ENCODE measurements at regions of chr2 and their contacts with region 1.

Region 1: DNA sequence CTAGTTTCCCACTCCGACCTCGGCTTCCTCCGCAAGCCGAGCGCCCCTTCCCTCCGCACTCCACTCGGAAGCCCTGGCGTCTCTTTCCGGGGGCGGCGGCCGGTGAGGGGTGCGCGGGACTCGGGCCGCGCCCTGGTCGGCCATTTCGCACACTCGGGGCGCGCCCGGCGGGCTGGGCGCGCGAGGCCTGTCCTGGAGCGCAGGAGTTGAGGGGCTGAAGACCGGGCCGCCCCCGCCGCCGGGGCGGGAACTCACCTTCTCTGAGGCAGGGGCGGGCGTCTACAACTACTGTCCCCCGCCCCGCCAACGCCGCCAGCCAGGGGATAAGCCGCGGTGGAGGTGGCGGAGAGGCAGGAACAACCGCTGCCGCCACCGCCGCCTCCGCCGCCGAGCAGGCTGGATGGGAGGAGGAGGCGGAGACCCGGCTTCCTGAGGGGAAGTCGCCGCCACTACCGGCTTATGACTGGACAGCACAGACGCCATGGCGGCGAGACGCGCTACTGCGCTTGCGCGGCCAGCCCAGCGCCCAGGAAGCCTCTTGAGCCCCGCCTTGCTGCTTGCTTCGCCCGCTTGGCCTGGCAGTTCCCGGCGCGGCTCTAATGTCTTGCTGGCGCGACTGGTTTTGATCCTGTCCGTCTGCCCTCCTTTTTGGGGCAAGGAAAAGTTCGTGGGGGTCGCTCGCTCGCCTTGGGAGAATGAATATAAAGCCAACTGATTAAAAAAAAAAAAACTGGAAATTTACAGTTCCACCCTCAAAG is at the start of gene KRCC1:
- DNase-seq: peak; percentile 86 to 98 (median 94)
- ATAC-seq: peak; percentile 91
- H3K4me3 ChIP-seq: peak within 1 kb of the TSS; percentile 57 to 84
- H3K4me3 Mint-ChIP-seq: peak within 1 kb of the TSS; percentile 96
- H3K27ac ChIP-seq: peak within 1 kb of the TSS; percentile 80 to 90
- H3K27ac Mint-ChIP-seq: peak within 1 kb of the TSS; percentile 98
- H3K4me1 ChIP-seq: peaks cover 23% of the 10 kb centered on the region
- H3K4me1 Mint-ChIP-seq: peaks cover 54% of the 10 kb centered on the region
- H3K27me3 ChIP-seq: no peaks in the 10 kb centered on the region
- H3K27me3 Mint-ChIP-seq: no peaks in the 10 kb centered on the region
- CTCF ChIP-seq: no peak
- total RNA-seq, gene KRCC1: 3.1 to 3.6 TPM

Region 2: DNA sequence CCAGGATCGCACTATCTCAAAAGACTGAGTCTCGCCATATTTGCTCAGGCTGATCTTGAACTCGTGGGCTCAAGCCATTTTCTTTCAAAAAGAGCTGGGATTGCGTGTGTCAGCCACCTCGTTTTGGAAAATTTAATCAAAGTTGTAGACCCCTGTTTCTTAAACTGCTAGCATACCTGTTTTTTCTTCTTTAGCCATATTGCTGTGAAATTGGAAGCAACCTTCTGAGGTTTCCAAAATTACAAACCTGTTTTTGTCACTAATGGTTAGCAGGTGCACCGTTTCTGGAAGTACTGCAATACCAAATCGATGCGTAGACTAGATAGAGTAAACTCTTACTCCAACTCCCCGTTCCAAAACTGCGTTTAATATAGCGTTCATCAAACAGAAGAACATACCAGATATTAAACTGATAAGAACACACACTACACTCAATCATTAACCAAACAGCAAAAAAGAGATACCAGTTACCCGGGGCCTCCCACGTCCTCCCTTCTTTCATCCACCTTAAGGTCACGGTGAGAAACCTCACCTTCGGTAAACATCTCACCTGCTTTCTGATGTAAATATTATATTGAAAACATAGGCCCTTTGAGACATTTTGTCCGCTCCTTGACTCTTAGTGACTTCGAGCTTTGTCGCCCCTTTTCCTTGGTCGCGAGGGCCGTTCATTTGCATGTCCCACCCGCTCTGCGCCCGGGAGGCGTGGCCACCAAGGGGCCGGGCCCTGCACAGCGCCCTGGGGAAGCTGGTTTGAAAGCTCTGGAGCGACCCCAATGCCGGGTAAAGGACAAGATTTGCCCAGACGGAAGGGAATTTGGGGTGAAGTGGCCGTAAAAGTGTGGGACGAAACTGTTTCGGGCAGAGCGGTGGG is 39.2 kb before region 1 on chr2 and contains the start of gene RNU2-63P:
- CTCF ChIA-PET with region 1: interaction called, 9 read pairs
- POLR2A ChIA-PET with region 1: interaction called, 5 read pairs
- intact Hi-C with region 1: loop called (anchors 1 kb)
- DNase-seq: peak; percentile 65 to 89 (median 79)
- ATAC-seq: peak; percentile 86
- H3K4me3 ChIP-seq: peak within 1 kb of the TSS; percentile 68 to 92
- H3K4me3 Mint-ChIP-seq: peak within 1 kb of the TSS; percentile 100
- H3K27ac ChIP-seq: peak within 1 kb of the TSS; percentile 89 to 90
- H3K27ac Mint-ChIP-seq: peak within 1 kb of the TSS; percentile 100
- H3K4me1 ChIP-seq: peaks cover 5% of the 10 kb centered on the region
- H3K4me1 Mint-ChIP-seq: peaks cover 22% of the 10 kb centered on the region
- H3K27me3 ChIP-seq: no peaks in the 10 kb centered on the region
- H3K27me3 Mint-ChIP-seq: no peaks in the 10 kb centered on the region
- CTCF ChIP-seq: no peak
- total RNA-seq, gene RNU2-63P: 4.4 to 9.1 TPM

Region 3: DNA sequence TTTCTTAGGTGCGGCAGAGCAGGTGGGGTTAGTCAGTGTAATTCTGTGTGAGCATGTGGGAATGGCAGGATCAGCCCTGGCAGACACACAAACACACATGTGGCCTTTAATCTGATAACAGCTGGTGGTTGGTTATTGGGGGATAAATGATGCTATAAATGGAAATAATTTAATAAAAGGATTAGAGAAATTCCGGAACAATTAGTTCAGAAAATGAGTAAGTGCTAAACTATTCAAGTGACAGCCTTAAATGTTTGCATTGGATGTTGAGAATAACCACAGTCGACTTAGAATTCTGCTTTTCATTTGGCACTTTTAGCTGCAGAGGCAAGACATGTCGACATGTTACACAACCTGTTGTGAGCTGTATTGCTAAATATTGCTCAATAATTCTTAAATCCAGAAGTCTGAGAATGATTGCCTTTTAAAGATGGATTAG is 19.3 kb after region 1 on chr2:
- CTCF ChIA-PET with region 1: interaction called, 23 read pairs
- POLR2A ChIA-PET with region 1: no interaction called
- intact Hi-C with region 1: no loop called
- DNase-seq: no peak
- ATAC-seq: no peak
- H3K4me3 ChIP-seq: no peak overlapping the region
- H3K4me3 Mint-ChIP-seq: no peak overlapping the region
- H3K27ac ChIP-seq: no peak overlapping the region
- H3K27ac Mint-ChIP-seq: no peak overlapping the region
- H3K4me1 ChIP-seq: no peaks in the 10 kb centered on the region
- H3K4me1 Mint-ChIP-seq: no peaks in the 10 kb centered on the region
- H3K27me3 ChIP-seq: no peaks in the 10 kb centered on the region
- H3K27me3 Mint-ChIP-seq: no peaks in the 10 kb centered on the region
- CTCF ChIP-seq: no peak

Region 4: GRCh38 chr2:88159955-88160415 is 104.4 kb after region 1 on chr2:
- CTCF ChIA-PET with region 1: interaction called, 130 read pairs
- POLR2A ChIA-PET with region 1: interaction called, 10 read pairs
- intact Hi-C with region 1: loop called (anchors 1 kb)
- DNase-seq: peak in 8 of 9 experiments; percentile 30 to 74 (median 49)
- ATAC-seq: peak; percentile 54
- H3K4me3 ChIP-seq: no peak overlapping the region
- H3K4me3 Mint-ChIP-seq: no peak overlapping the region
- H3K27ac ChIP-seq: no peak overlapping the region
- H3K27ac Mint-ChIP-seq: no peak overlapping the region
- H3K4me1 ChIP-seq: no peaks in the 10 kb centered on the region
- H3K4me1 Mint-ChIP-seq: no peaks in the 10 kb centered on the region
- H3K27me3 ChIP-seq: no peaks in the 10 kb centered on the region
- H3K27me3 Mint-ChIP-seq: peaks cover 2% of the 10 kb centered on the region
- CTCF ChIP-seq: peak; percentile 96

Region 5: GRCh38 chr2:88691339-88692183 is 636.0 kb after region 1 on chr2 and contains the start of gene RPIA:
- CTCF ChIA-PET with region 1: no interaction called
- POLR2A ChIA-PET with region 1: no interaction called
- intact Hi-C with region 1: loop called in 1 of 2 experiments (anchors 10 kb)
- DNase-seq: peak; percentile 97 to 100 (median 99)
- ATAC-seq: peak; percentile 94
- H3K4me3 ChIP-seq: peak within 1 kb of the TSS; percentile 69 to 78
- H3K4me3 Mint-ChIP-seq: peak within 1 kb of the TSS; percentile 91
- H3K27ac ChIP-seq: peak within 1 kb of the TSS; percentile 66 to 80
- H3K27ac Mint-ChIP-seq: peak within 1 kb of the TSS; percentile 92
- H3K4me1 ChIP-seq: peaks cover 25% of the 10 kb centered on the region
- H3K4me1 Mint-ChIP-seq: peaks cover 63% of the 10 kb centered on the region
- H3K27me3 ChIP-seq: no peaks in the 10 kb centered on the region
- H3K27me3 Mint-ChIP-seq: no peaks in the 10 kb centered on the region
- CTCF ChIP-seq: peak; percentile 55
- total RNA-seq, gene RPIA: 26.5 to 27.5 TPM